Dorsolateral prefrontal cortex (tissue), 120 donors: ENCODE measurements at regions of chr1 and their contacts with region 1.

Region 1: DNA sequence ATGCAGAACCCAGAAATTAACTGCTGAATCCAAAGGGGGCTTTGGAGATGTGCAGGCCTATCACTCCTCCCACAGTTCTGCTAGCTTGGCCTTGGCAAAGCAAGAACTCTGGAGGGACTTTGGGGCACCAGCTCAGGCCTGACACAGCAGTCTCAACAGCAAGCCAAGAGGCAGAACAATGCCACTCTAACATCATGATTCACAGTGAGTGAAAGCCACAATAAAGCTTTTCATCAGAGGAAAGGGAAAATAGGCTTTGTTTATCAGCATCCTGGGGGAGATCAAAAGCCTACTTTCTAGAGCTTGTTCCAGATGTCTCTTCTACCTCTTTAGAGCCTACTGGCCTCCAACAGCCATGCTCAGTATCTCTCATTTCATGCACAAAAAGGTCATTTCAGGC is 283.4 kb downstream of the KCNH1 start:
- DNase-seq: peak; percentile 37 to 89 (median 80)
- H3K4me3 ChIP-seq: peak overlapping the region in 4 of 59 donors; percentile 2 to 33 (median 15)
- H3K27ac ChIP-seq: peak overlapping the region; percentile 76 to 99 (median 93)
- H3K27me3 ChIP-seq: no peaks in the 10 kb centered on the region
- CTCF ChIP-seq: peak in 26 of 56 donors; percentile 7 to 43 (median 26)

Region 2: DNA sequence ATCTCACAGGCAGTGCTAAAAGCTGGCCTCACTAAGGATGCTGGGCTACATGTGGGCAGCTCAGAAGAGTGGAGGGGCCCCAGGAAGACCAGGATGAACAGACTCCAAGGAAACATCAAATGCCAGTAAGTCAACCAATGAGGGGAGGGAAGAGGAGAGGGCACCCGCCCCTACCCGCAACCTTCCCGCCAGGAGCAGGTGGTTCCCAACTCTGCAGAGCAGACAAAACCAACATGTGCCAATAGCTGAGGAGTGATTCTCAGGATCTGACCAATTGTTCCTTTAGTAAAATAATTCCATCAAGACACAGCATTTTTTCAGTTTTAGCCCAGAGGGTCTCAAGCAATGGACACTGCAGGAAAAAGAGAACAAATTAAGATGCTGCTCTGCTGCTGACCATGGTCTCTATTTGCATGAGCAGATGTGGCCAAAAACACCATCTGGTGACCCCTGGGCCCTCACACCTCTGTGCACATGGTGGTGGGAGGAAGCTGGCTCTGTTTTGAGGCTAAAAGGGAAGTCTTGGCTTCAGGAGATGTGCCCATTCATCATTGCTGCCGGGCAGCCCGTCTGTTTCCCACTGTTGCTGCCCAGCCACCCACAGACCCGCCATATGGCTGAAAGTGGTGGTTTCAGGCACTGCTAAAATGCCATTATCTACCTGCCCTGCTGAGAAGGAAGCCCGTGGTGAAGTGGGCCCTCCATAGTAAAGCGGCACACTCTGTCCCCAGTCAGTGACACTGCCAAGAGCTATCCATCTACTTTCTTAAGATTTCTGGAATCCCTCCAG is 51.6 kb after region 1 on chr1:
- intact Hi-C with region 1: loop called in 1 of 2 experiments (anchors 5 kb)
- DNase-seq: peak in 4 of 10 donors; percentile 32 to 90 (median 58)
- H3K4me3 ChIP-seq: no peak overlapping the region
- H3K27ac ChIP-seq: peak overlapping the region in 24 of 59 donors; percentile 5 to 86 (median 31)
- H3K27me3 ChIP-seq: no peaks in the 10 kb centered on the region
- CTCF ChIP-seq: no peak

Region 3: DNA sequence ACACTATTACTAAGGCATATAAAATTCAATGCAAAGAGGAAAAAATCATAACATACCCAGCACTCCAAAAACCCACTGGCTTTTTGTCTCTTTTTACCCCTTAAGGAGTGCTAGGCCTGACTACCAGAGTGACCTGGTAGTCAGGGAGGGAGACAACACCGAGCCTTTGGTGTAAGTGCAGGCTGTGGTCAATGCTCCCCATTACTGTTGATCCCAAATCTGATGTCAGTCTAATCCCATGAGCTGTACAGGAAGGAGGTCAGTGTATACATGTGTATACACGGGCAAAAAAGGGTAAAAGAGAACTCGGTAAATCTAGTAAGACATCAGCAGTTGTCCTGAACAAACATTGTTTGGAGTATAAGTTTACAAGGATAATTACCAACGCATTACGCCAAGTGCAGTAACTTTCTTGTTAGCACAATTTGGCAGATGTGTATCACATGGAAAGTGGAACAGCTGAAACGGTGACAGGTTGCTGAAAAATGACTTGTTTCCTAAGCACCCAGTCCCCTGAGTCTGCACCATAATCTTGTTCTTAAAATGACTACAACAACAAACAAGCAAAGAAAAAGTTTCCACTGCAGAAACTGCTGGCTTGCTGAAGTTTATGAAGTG is 65.4 kb after region 1 on chr1:
- intact Hi-C with region 1: no loop called
- DNase-seq: no peak
- H3K4me3 ChIP-seq: no peak overlapping the region
- H3K27ac ChIP-seq: peak overlapping the region in 4 of 59 donors; percentile 19 to 51 (median 44)
- H3K27me3 ChIP-seq: no peaks in the 10 kb centered on the region
- CTCF ChIP-seq: no peak

Region 4: GRCh38 chr1:210944252-210944651 is 93.7 kb after region 1 on chr1:
- intact Hi-C with region 1: loop called in 1 of 2 experiments (anchors 10 kb)
- DNase-seq: peak in 1 of 10 donors; percentile 60
- H3K4me3 ChIP-seq: no peak overlapping the region
- H3K27ac ChIP-seq: peak overlapping the region in 8 of 59 donors; percentile 1 to 54 (median 9)
- H3K27me3 ChIP-seq: no peaks in the 10 kb centered on the region
- CTCF ChIP-seq: no peak